ENCODE measurements at regions of chr11 and their contacts with region 1.

Region 1: DNA sequence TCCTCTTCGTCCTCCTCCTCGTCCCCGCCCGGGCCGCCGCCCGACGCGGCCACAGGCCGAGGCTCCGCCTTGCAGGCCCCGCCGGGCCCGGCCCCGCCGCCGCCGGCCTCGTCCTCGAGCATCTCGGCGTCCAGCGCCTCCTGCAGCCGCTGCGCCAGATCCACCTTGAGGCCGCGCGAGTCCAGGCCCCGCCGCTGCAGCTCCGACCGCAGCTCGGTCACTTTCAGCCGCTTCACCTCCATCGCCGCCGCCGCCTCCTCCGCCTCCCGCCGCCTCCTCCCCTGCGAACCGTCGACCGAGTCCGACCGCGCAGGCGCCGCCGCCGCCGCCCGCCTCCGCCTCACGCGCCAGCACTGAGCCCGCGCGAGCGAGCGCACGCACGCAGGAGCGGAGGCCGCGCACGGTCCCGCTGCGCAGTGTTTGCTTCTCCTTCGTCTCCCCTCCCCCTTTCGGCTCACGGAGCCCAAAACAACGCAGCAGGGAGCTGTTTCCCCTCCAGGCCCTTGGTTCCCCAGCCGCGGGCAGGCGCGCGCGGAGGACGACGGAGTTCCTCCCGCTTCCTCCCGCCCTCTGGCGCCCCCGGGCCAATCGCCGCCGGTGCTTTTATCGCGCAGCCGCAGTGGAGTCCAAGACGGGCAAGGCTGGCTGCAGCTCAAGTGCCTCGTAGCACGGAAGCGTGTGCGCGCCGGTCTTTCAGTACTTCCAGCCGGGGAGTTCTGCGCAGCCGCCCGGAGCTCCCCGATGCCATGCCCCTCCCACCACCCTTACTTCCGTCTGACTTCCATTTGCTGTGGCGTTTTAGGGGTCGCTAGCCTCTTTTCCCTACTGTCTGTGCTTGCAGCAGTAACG is at the start of gene HNRNPUL2:
- DNase-seq: peak; percentile 99
- total RNA-seq, gene HNRNPUL2: 34.8 TPM

Region 2: GRCh38 chr11:62705880-62706849 is 21.0 kb before region 1 on chr11:
- intact Hi-C with region 1: loop called (anchors 1 kb)
- DNase-seq: peak; percentile 98

Region 3: DNA sequence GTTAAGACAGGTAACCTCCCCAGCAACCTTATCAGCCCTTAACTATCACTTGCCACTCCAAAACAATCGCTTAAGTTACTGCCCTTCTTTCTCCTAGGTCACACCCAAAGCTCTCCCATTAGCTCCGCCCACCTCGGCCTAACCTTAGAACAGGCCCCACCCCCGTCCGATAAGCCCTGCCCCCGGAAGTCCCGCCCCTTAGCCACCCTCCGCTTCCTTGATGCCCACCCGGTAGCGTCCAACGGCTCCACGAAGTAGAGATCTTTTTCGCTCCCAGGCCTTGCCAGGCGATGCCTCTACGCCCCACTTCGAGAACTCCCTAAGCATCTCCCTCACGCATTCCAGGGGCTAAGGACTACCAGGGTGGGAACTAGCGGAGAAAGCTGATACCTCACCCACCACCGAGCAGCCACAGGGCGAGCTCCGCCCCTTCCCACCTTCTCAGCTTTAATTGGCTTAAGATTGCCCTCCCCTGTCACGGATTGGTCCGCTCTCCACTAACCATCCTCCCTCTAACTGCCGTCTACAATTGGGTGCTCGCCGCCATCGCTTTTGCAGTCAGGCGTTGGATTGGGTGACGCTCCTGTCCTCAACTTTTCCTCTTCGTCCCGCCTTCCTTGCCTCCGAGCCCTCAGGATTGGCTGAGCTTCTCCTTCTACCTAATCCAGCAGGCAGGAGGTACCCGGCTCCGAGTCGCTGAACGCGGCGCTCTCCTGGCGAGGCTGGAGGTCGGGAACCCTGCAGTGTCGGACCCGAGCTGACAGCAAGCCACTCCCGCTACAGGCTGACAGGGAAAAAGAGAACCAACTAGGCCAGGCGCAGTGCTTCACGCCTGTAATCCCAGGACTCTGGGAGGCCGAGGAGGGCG is 26.8 kb after region 1 on chr11 and contains the start of gene ZBTB3:
- intact Hi-C with region 1: loop called (anchors 1 kb)
- DNase-seq: peak; percentile 99
- total RNA-seq, gene ZBTB3: 10.9 TPM

Region 4: GRCh38 chr11:62771144-62772021 is 44.2 kb after region 1 on chr11 and contains the start of gene TAF6L:
- intact Hi-C with region 1: loop called (anchors 2 kb)
- DNase-seq: peak; percentile 99
- total RNA-seq, gene TAF6L: 9.7 TPM

Region 5: DNA sequence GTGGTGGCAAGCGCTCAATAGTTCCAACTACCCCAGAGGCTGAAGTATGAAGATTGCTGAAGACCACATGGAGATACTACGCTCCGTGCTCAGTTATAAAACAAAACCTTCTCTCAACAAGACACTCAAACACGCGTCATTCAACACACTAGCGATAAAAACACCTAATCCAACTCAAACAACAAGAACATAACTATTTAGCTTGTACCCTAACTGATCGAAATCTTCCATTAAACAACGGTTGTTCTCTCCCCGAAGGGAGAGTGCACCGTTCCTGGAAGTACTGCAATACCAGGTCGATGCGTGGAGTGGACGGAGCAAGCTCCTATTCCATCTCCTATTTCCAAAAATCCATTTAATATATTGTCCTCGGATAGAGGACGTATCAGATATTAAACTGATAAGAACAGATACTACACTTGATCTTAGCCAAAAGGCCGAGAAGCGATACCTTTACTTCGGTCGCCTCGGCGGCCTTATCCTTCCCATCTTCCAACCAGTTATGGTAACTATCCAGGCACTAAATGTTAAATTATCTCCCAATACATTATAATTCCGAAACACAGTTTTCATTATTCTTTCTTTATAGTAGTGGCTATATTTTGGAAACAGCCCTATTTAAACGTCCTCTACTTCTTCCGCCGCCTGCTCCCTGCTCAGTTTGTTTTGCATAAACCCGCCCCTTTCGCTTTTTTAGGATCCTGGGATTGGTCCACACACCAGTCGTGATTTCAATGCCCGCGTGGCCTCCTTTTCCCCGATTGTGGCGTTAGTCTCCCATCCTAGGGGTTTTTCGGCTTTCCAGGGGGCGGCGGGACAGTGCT is 114.4 kb after region 1 on chr11:
- intact Hi-C with region 1: loop called (anchors 5 kb)
- DNase-seq: peak; percentile 92

Region 6: GRCh38 chr11:62855571-62856332 is 128.6 kb after region 1 on chr11:
- intact Hi-C with region 1: loop called (anchors 5 kb)
- DNase-seq: peak; percentile 98

Region 7: GRCh38 chr11:62880803-62881578 is 153.9 kb after region 1 on chr11 and contains the start of gene SLC3A2:
- intact Hi-C with region 1: no loop called
- DNase-seq: peak; percentile 94
- total RNA-seq, gene SLC3A2: 38.6 TPM